ENCODE measurements at regions of chr18 and their contacts with region 1.

Region 1: GRCh38 chr18:46856973-46857372 is 60.3 kb downstream of the PIAS2 start:
- DNase-seq: no peak

Region 2: GRCh38 chr18:46886893-46887292 is 29.9 kb after region 1 on chr18:
- intact Hi-C with region 1: loop called in 1 of 2 experiments (anchors 1 kb)
- DNase-seq: no peak

Region 3: DNA sequence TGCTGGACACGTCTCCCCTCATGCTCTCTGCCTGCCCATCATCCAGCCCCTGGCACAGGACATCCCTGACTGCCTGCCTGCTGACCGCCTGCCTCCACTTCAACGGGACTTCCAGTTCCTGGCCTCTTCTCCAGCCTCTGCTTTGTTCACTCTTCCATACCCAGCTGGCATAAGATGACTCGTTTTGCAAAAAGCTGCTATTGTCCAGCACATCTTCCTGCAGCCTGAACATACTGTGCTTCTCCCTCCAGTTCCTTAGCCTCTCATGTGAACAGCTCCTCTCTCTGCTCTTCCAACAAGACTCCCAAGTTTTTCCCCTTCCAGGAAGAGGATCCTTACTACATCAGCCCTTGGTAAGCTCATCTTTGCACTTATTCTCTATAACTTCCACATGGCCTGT is 456.9 kb after region 1 on chr18:
- intact Hi-C with region 1: no loop called
- DNase-seq: no peak

Measured in posterior vena cava (tissue), 2 donors.